Activated CD4-positive, alpha-beta T cell treated with anti-CD3 and anti-CD28 coated beads for 36 hours (primary cell): ENCODE measurements at regions of chrX and their contacts with region 1.

Region 1: DNA sequence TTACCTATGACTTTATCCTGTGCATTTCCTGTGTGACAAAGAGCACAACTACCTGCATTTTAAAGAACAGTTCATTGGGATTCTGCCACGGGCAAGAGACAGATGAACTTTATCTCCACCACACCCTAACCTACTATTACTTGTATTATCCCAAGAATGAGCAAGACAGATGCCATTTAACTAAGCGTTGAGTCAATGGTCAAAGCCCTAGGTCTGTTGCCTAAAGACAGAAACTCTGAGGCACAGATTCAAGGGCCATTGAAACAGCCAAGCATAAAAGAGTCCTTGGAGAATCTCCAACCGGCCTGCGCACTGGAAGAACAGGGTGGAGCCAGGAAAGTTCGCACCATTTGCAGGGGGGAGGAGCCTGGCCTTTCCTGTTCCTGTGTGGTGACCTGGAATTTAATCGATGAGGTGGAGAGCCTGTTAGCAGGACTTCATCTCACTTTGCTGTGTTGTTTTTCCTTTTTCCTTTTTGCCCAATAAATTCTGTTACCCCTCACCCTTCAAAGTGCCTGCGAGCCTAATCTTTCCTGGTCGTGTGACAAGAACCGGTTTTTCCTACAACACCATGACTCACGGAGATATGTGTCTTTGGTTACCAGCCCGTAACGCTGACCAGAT is 146.4 kb upstream of the DIAPH2 start:
- DNase-seq: no peak
- ATAC-seq: no peak
- H3K4me3 Mint-ChIP-seq: no peak overlapping the region
- H3K27ac Mint-ChIP-seq: no peak overlapping the region
- H3K4me1 Mint-ChIP-seq: no peaks in the 10 kb centered on the region
- H3K27me3 Mint-ChIP-seq: no peaks in the 10 kb centered on the region

Region 2: GRCh38 chrX:96474029-96474740 is 64.0 kb before region 1 on chrX:
- CTCF ChIA-PET with region 1: no interaction called
- POLR2A ChIA-PET with region 1: no interaction called
- intact Hi-C with region 1: loop called in 1 of 2 experiments (anchors 10 kb)
- DNase-seq: no peak
- ATAC-seq: no peak
- H3K4me3 Mint-ChIP-seq: no peak overlapping the region
- H3K27ac Mint-ChIP-seq: no peak overlapping the region
- H3K4me1 Mint-ChIP-seq: no peaks in the 10 kb centered on the region
- H3K27me3 Mint-ChIP-seq: no peaks in the 10 kb centered on the region

Region 3: GRCh38 chrX:96576368-96576767 is 38.2 kb after region 1 on chrX:
- CTCF ChIA-PET with region 1: no interaction called
- POLR2A ChIA-PET with region 1: no interaction called
- intact Hi-C with region 1: no loop called
- DNase-seq: no peak
- ATAC-seq: no peak
- H3K4me3 Mint-ChIP-seq: no peak overlapping the region
- H3K27ac Mint-ChIP-seq: no peak overlapping the region
- H3K4me1 Mint-ChIP-seq: no peaks in the 10 kb centered on the region
- H3K27me3 Mint-ChIP-seq: peaks cover 2% of the 10 kb centered on the region